K562 (cell line): ENCODE measurements at regions of chr6 and their contacts with region 1.

Region 1: DNA sequence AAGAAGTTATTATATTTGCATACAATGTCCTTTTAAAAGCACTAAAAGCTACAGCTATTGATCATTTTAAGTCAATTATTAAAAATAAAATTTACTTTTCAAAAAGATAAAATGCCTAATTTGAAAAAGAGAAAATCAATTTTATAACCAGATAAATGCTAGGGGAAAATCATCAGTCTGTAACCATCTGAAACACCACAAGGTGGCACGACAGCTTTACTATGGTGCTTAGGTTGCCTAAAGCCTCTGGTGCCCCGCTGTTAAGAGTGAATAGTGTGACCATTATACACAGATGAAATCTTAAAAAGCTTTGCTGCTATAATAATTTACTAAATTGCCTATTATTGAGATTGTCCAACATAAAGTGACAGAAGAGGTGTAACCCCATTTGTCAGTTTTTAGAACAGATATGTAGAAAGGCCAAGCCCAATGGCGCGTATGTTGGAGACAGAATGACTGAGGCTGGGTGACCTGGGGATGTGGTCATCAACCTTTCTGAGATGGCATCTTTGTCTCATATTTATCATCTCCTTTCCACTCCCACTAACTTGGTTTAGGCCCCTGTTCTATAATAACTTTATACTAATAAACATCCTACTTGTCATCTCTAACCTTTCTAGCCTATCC is 100.8 kb downstream of the MOXD1 start:
- DNase-seq: peak in 3 of 4 experiments; percentile 23 to 44 (median 24)
- ATAC-seq: peak; percentile 91
- H3K4me3 ChIP-seq: no peak overlapping the region
- H3K27ac ChIP-seq: no peak overlapping the region
- H3K4me1 ChIP-seq: no peaks in the 10 kb centered on the region
- H3K27me3 ChIP-seq: no peaks in the 10 kb centered on the region
- CTCF ChIP-seq: peak; percentile 45 to 62 (median 50); a peak in 5 of 6 replicates
- EP300 ChIP-seq: no peak
- POLR2A ChIP-seq: no peak
- RAD21 ChIP-seq: peak; percentile 68 to 70

Region 2: DNA sequence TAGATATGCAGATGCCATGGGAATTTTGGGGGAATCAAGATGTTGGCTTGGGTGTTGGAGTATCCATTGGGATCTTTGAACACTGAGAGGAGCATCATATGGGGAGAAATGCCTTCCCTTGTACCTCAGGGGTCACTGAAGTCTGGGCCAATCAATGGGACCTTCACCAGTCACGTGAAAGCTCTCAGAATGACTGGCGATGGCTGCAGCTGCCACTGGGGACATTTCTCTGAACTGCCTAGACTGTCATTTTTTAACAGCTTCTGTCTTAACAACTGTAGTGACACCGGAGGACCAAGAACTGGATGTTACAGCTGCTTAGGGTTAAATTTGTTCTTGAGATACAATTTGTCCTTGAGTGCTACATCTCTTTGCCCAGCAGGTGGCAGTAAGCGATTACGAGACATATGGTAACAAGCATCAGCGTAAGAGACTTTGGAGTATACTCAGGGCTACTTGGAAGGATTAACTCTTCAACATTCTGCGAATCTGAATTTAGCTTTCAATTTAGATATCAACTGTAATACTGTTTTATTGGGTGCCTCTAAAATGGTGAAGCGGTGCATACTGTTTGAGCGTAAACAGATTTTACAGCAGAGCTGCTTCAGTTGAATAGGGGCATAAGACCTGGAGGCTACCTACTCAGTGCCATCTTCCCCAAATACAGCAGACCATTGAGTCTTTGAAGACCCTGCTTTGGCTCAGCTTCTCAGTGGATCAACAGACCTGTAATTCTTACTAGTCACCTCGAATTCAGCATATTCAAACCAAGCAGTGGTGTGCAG is 385.3 kb before region 1 on chr6:
- CTCF ChIA-PET with region 1: interaction called, 5 read pairs
- POLR2A ChIA-PET with region 1: no interaction called
- in situ Hi-C with region 1: no loop called
- intact Hi-C with region 1: loop called (anchors 2 kb)
- DNase-seq: peak; percentile 41 to 69 (median 59)
- ATAC-seq: peak; percentile 90
- H3K4me3 ChIP-seq: no peak overlapping the region
- H3K27ac ChIP-seq: no peak overlapping the region
- H3K4me1 ChIP-seq: no peaks in the 10 kb centered on the region
- H3K27me3 ChIP-seq: no peaks in the 10 kb centered on the region; a peak in 1 of 5 replicates
- CTCF ChIP-seq: peak; percentile 60 to 82 (median 76)
- EP300 ChIP-seq: no peak
- POLR2A ChIP-seq: no peak
- RAD21 ChIP-seq: peak; percentile 51 to 64

Region 3: GRCh38 chr6:132279592-132280139 is 20.8 kb before region 1 on chr6:
- CTCF ChIA-PET with region 1: interaction called, 22 read pairs
- POLR2A ChIA-PET with region 1: no interaction called
- in situ Hi-C with region 1: no loop called
- intact Hi-C with region 1: loop called (anchors 1 kb)
- DNase-seq: peak; percentile 55 to 83 (median 65)
- ATAC-seq: peak; percentile 94
- H3K4me3 ChIP-seq: peak overlapping the region; percentile 34
- H3K27ac ChIP-seq: no peak overlapping the region; the same call in 2 of the 3 replicates
- H3K4me1 ChIP-seq: no peaks in the 10 kb centered on the region
- H3K27me3 ChIP-seq: no peaks in the 10 kb centered on the region
- CTCF ChIP-seq: peak; percentile 69 to 96 (median 91)
- EP300 ChIP-seq: no peak
- POLR2A ChIP-seq: no peak
- RAD21 ChIP-seq: peak; percentile 80 to 82

Region 4: DNA sequence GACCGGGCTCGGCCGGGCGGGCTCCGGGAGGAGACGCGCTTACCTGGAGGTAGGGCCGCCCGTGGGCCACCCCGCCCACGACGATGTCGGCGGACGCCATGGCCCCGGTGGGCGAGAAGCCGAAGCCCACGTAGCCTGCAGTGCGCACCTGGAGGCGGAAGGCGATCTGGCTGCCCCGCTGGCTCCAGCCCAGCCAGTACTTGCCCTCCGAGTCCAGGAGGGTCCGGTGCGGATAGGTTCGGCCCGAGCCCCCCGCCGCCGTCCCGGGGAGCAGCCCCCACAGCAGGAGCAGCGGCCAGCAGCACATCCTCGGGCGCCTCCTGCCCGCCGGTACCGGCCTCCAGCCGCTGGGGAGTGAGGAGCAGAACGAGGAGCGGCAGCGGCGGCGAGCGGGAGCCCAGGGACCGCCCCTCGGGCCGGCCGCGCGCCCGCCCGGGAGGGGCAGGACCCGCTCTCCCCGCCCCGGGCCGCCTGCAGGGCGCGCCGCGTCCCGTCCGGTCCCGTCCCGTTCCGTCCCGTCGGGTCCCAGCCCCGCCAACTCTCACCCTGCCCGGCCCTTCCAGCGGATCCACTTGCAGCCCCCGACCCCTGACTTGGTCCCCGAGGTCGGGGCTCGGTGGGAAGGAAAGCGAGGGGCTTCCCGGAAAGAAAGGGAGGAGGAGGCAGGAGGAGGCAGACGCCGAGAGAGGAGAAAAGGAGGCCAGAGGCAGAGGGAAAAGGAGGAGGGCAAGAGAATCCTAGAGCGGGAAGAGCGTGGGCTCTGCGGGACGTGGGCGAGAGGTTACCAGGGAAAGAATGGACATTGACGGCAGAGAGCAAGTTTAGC is 100.9 kb after region 1 on chr6 and contains the start of gene MOXD1:
- CTCF ChIA-PET with region 1: no interaction called
- POLR2A ChIA-PET with region 1: no interaction called
- in situ Hi-C with region 1: no loop called
- intact Hi-C with region 1: no loop called
- DNase-seq: peak; percentile 2 to 25 (median 16)
- ATAC-seq: peak; percentile 88
- H3K4me3 ChIP-seq: no peak within 1 kb of the TSS
- H3K27ac ChIP-seq: no peak within 1 kb of the TSS
- H3K4me1 ChIP-seq: peaks cover 0 to 11% of the 10 kb centered on the region in 2 experiments; a peak in 2 of 5 replicates
- H3K27me3 ChIP-seq: peaks cover 9 to 28% of the 10 kb centered on the region in 2 experiments; a peak in 4 of 5 replicates
- CTCF ChIP-seq: no peak
- EP300 ChIP-seq: no peak
- POLR2A ChIP-seq: no peak
- RAD21 ChIP-seq: no peak
- polyA plus RNA-seq, gene MOXD1: not detected

Region 5: GRCh38 chr6:132465530-132466485 is 165.4 kb after region 1 on chr6:
- CTCF ChIA-PET with region 1: no interaction called
- POLR2A ChIA-PET with region 1: no interaction called
- in situ Hi-C with region 1: no loop called
- intact Hi-C with region 1: no loop called
- DNase-seq: no peak
- ATAC-seq: no peak
- H3K4me3 ChIP-seq: no peak overlapping the region
- H3K27ac ChIP-seq: no peak overlapping the region
- H3K4me1 ChIP-seq: no peaks in the 10 kb centered on the region
- H3K27me3 ChIP-seq: no peaks in the 10 kb centered on the region
- CTCF ChIP-seq: no peak
- EP300 ChIP-seq: no peak
- POLR2A ChIP-seq: no peak
- RAD21 ChIP-seq: no peak

Region 6: DNA sequence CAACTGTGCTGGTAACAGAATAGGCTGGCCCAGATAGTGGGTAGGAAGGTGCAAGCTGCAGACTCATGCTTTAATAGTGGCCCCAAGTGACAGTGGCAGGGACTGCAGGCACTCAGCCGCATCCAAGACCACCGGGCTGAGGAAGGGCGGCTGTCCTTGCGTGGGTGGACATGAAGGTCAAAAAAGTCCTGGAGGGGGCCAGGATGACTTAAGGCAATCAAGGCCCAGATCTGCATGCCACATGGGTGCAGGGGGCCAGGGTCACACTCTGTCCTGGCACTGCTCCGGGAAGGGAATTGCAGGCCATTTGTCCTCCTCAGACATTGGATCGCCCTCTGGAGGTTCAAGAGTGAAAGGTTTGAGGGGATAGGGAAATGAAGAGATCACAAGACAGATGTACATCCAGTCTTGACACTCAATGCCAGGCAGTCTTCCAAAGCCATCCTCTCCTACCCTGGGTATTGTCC is 467.6 kb after region 1 on chr6:
- CTCF ChIA-PET with region 1: interaction called, 7 read pairs
- POLR2A ChIA-PET with region 1: no interaction called
- in situ Hi-C with region 1: loop called (anchors 25 kb)
- intact Hi-C with region 1: loop called (anchors 5 kb)
- DNase-seq: peak; percentile 42 to 67 (median 54)
- ATAC-seq: peak; percentile 99
- H3K4me3 ChIP-seq: peak overlapping the region; percentile 34
- H3K27ac ChIP-seq: no peak overlapping the region; the same call in 2 of the 3 replicates
- H3K4me1 ChIP-seq: no peaks in the 10 kb centered on the region
- H3K27me3 ChIP-seq: no peaks in the 10 kb centered on the region
- CTCF ChIP-seq: peak; percentile 69 to 92 (median 71)
- EP300 ChIP-seq: no peak
- POLR2A ChIP-seq: no peak
- RAD21 ChIP-seq: peak; percentile 80 to 83